ENCODE measurements at regions of chr13 and their contacts with region 1.

Region 1: GRCh38 chr13:43804461-43805070 is 17.8 kb upstream of the ENOX1 start:
- DNase-seq: peak; percentile 24
- H3K4me3 ChIP-seq: no peak overlapping the region
- H3K27ac ChIP-seq: no peak overlapping the region
- H3K4me1 ChIP-seq: no peaks in the 10 kb centered on the region
- H3K27me3 ChIP-seq: no peaks in the 10 kb centered on the region
- CTCF ChIP-seq: peak; percentile 50

Region 2: GRCh38 chr13:43085545-43085944 is 719.0 kb before region 1 on chr13:
- intact Hi-C with region 1: loop called (anchors 5 kb)
- DNase-seq: no peak
- H3K4me3 ChIP-seq: no peak overlapping the region
- H3K27ac ChIP-seq: no peak overlapping the region
- H3K4me1 ChIP-seq: no peaks in the 10 kb centered on the region
- H3K27me3 ChIP-seq: no peaks in the 10 kb centered on the region
- CTCF ChIP-seq: peak; percentile 54

Region 3: DNA sequence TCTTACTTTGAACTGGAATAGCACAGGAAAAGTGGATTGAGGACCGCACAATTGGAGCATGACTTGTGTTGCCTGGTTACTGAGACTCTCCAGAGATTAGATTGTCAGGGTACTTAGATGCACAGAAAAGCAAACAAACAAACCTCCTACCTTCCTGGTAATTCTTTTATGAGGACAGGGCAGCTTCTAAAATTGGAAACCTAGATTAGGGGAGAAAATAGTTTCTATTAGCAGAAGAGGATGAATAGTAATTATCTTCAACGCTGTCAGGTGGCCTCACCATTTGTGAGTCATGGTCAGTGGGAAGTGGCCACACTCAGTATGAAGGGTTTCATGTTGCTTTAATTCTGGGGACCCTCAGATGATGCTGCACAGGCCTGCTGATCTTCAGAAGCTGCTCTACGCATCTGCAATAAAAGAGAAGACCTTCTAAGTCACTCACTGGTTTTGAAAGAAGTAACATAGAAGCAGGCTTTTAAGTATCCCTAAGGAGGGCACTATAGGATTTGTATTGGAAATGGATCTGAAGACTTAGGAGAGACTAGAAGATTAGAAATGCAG is 181.9 kb after region 1 on chr13:
- intact Hi-C with region 1: no loop called
- DNase-seq: no peak
- H3K4me3 ChIP-seq: no peak overlapping the region
- H3K27ac ChIP-seq: no peak overlapping the region
- H3K4me1 ChIP-seq: no peaks in the 10 kb centered on the region
- H3K27me3 ChIP-seq: no peaks in the 10 kb centered on the region
- CTCF ChIP-seq: no peak

Region 4: DNA sequence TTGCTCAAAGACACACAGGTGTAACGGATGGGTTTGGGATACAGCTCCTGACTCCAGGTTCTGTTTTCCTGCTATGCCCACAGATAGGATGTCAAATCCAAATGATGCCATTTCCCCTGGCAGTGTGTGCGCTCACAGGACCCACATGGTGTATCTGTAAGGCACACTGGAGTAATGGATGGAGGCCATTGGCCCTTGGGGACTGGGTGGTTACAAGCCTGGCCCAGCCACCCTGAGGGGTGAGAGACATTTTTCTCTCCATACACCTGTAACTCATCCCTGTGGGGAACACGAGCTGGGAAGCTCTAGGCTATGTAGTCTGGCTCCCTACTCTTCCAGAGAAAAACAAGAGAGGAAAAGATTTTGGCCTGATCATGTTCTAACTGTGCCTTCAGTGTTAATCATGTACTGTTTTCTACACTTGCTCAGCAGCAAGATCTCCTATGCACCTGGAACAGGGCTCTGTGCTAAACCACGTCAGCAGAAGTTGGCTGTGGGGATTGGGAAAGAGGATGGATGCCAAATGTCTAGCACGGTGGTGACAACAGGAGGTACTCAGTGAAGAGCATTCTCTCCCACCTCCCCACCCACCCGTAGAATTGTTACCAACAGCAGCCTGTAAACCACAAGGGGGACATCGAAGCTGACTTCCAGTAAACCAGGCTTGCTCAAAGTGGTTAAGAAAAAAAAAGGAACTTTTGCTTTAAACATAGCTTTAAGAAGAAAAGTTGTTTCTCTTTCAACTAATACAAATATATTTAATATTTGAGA is 312.2 kb after region 1 on chr13:
- intact Hi-C with region 1: no loop called
- DNase-seq: no peak
- H3K4me3 ChIP-seq: no peak overlapping the region
- H3K27ac ChIP-seq: no peak overlapping the region
- H3K4me1 ChIP-seq: no peaks in the 10 kb centered on the region
- H3K27me3 ChIP-seq: no peaks in the 10 kb centered on the region
- CTCF ChIP-seq: no peak

Region 5: GRCh38 chr13:44197791-44198770 is 393.5 kb after region 1 on chr13:
- intact Hi-C with region 1: no loop called
- DNase-seq: no peak
- H3K4me3 ChIP-seq: no peak overlapping the region
- H3K27ac ChIP-seq: no peak overlapping the region
- H3K4me1 ChIP-seq: no peaks in the 10 kb centered on the region
- H3K27me3 ChIP-seq: no peaks in the 10 kb centered on the region
- CTCF ChIP-seq: no peak

Measured in colonic mucosa (tissue), 4 donors.